ENCODE measurements at regions of chr22 and their contacts with region 1.

Region 1: DNA sequence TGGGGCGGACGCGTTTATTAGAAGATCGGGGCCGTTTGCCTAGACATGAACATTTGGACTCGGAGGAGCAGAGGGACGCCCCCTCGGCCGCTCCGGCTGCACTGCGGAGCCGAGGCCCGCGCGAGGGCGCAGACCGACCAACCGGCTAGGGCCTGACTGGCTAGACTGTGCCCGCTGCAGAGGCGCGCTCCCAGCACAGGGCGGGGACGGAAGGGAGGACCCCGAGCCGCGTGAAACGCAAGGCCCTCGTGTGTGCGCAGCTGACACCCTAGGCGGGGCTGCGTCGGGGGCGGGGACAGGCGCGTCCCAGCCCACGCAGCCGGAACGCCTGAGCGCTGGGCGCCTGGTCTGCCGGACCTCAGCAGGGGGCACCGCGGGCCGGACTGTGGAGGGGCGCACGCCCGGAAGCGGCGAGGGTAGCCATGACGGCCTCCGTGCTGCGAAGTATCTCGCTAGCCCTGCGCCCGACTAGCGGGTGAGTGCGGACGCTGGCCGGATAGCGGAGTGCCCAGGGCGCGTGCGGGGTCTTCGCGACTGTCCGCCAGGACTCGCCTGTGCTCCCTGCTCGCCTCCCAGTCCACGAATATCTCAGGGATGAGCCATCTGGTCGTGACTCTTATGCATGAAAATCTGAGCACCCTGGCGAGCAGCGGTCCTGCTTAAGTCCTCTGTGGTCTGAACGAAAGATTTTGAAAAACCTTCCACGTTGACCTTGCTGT is at the start of gene MRPL40:
- DNase-seq: peak; percentile 88
- H3K4me3 Mint-ChIP-seq: peak within 1 kb of the TSS; percentile 92
- H3K27ac Mint-ChIP-seq: peak within 1 kb of the TSS; percentile 94
- H3K4me1 Mint-ChIP-seq: peaks cover 41% of the 10 kb centered on the region
- H3K27me3 Mint-ChIP-seq: no peaks in the 10 kb centered on the region
- total RNA-seq, gene MRPL40: 36.0 and 38.5 TPM in 2 replicates

Region 2: GRCh38 chr22:19122143-19122751 is 310.0 kb before region 1 on chr22 and contains the start of gene DGCR2:
- intact Hi-C with region 1: loop called (anchors 5 kb)
- DNase-seq: peak; percentile 91
- H3K4me3 Mint-ChIP-seq: peak within 1 kb of the TSS; percentile 89
- H3K27ac Mint-ChIP-seq: peak within 1 kb of the TSS; percentile 64
- H3K4me1 Mint-ChIP-seq: peaks cover 47% of the 10 kb centered on the region
- H3K27me3 Mint-ChIP-seq: peaks cover 1% of the 10 kb centered on the region
- total RNA-seq, gene DGCR2: 23.2 and 24.1 TPM in 2 replicates

Region 3: DNA sequence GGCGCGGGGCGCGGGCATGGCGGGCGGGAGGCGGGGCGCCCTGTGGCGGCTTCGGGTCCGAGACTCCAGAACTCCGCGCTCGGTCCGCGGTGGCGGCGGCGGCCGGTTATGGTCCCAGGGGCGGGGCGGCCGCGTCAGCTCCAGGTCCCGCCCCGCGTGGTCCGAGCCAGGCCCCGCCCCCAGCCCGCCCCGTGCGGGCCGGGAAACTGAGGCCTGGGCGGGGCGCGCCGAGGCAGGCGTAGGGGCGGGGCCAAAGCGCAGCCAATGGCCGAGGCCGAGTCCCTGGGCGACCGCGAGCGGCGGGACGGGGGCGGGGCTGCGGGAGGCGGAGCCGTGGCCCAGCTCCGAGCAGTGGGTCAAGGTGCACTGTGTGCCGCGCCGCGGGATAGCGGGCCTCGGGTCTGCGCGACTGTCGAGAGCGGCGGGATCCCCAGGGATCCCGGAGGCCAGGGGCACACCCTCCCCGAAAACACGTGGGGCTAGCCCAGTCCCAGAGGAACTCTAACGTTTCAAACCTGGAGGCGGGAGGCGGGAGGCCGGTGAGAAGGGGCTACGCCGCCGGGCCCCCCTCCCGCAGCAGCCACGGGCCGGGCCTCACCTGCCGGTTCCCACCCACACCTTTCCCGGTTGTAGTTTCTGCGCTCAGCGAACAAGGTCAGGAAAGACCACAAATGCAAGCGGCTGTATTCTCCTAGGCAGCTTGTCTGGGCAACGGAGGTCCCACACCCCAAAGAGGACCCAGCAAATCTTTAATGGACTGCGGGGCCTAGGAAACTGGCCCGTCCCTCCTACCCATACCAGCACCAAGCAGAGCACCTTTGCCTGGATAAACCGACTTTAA is 253.4 kb before region 1 on chr22 and contains the start of gene SLC25A1:
- intact Hi-C with region 1: loop called (anchors 2 kb)
- DNase-seq: peak; percentile 86
- H3K4me3 Mint-ChIP-seq: peak within 1 kb of the TSS; percentile 85
- H3K27ac Mint-ChIP-seq: peak within 1 kb of the TSS; percentile 68
- H3K4me1 Mint-ChIP-seq: peaks cover 24% of the 10 kb centered on the region
- H3K27me3 Mint-ChIP-seq: peaks cover 4% of the 10 kb centered on the region
- total RNA-seq, gene SLC25A1: 31.7 and 34.0 TPM in 2 replicates

Region 4: GRCh38 chr22:19419464-19420178 is 12.7 kb before region 1 on chr22:
- intact Hi-C with region 1: loop called (anchors 1 kb)
- DNase-seq: peak; percentile 42
- H3K4me3 Mint-ChIP-seq: peak overlapping the region; percentile 67
- H3K27ac Mint-ChIP-seq: peak overlapping the region; percentile 79
- H3K4me1 Mint-ChIP-seq: peaks cover 63% of the 10 kb centered on the region
- H3K27me3 Mint-ChIP-seq: no peaks in the 10 kb centered on the region

Region 5: DNA sequence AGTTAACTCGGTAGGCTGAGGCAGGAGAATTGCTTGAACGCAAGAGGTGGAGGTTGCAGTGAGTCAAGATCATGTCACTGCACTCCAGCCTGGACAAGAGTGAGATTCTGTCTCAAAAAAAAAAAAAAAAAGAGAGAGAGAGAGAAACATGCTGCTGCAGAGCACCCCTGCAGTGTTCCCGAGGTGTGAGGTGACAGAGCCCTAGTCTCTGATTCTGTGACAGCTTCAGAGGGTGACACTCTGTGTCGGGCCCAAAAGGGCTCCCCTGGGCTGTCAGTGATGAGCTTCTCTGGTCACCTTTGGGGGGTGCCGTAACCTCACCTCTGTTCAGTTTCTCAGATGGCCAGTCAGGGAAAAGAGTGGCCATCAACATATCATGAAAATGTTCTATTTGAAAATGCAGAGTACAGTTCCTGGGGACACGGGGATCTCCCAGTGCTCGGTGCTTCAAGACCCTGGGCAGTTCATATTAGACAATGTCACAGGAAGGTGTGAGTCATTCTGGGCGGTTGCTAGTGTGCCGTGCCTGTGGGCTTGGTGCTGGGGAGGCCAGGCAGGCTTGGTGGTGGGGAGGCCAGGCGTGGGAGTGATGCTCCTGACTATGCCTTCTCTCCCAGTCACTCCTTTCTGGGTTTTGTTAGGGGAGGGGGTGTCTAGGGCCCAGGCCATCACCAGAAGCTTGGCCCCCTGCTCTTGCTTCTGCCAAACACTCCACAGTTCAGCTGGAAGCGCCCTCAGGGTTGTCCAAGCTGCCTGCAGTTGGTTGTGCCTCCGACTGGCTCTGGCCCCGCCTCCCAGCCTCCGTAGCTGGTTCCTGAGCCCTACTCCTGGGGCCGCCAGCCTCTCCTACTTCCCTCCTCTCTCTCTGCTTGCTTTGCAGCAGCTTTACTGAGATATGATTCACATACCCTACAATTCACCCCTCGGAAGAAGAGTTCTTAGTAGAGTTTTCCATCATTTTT is 144.4 kb after region 1 on chr22:
- intact Hi-C with region 1: loop called (anchors 5 kb)
- DNase-seq: peak; percentile 60
- H3K4me3 Mint-ChIP-seq: peak overlapping the region; percentile 27
- H3K27ac Mint-ChIP-seq: peak overlapping the region; percentile 80
- H3K4me1 Mint-ChIP-seq: peaks cover 44% of the 10 kb centered on the region
- H3K27me3 Mint-ChIP-seq: no peaks in the 10 kb centered on the region